ENCODE measurements at regions of chr6 and their contacts with region 1.

Region 1: GRCh38 chr6:38570750-38571149 is 69.0 kb downstream of the BTBD9 start:
- DNase-seq: peak; percentile 50
- ATAC-seq: no peak
- H3K4me3 ChIP-seq: no peak overlapping the region
- H3K4me3 Mint-ChIP-seq: no peak overlapping the region
- H3K27ac ChIP-seq: peak overlapping the region; percentile 91 to 93
- H3K27ac Mint-ChIP-seq: peak overlapping the region; percentile 81
- H3K4me1 ChIP-seq: peaks cover 17 to 21% of the 10 kb centered on the region in 2 donors
- H3K4me1 Mint-ChIP-seq: peaks cover 24% of the 10 kb centered on the region
- H3K27me3 ChIP-seq: no peaks in the 10 kb centered on the region
- H3K27me3 Mint-ChIP-seq: no peaks in the 10 kb centered on the region
- CTCF ChIP-seq: peak; percentile 71

Region 2: DNA sequence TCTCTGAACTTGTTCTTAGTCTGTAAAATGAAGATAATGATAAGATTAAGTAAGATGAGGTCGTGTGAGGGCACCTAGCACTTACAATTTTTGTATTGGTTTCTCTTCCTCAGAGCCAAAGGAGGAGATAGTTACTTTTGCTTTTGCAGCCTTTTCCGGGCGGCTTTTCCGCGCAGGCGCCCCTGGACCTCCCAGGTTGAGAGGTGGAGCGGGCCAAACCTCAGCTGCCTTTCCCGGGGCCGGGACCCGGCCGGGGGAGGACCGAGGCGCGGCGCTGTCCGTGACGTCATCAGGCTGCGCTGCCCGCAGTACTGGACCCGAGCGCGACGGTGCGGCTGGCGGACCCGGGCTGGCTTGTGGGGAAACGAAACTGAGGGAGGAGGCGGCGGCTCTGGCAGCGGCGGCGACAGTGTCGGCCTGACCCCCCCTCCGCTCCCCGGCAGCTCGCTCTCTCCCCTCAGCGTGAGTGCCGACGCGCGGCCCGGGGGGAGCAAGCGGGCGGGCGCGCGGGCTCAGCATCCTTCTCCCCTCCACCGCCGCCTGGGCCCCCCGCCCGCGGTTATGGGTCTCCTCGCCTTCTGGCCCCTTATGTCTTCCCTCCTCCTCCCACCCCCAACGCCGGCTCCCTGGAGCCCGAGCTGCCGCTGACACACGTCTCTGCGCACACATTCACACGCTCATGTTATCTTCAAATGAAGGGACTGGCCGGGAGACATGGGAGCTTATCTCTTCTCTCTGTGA is 1137.7 kb before region 1 on chr6 and contains the start of gene CMTR1:
- CTCF ChIA-PET with region 1: no interaction called
- POLR2A ChIA-PET with region 1: no interaction called
- intact Hi-C with region 1: loop called (anchors 5 kb)
- DNase-seq: peak; percentile 98
- ATAC-seq: peak; percentile 88
- H3K4me3 ChIP-seq: peak within 1 kb of the TSS; percentile 88 to 97 (median 94)
- H3K4me3 Mint-ChIP-seq: peak within 1 kb of the TSS; percentile 96
- H3K27ac ChIP-seq: peak within 1 kb of the TSS; percentile 92 to 94
- H3K27ac Mint-ChIP-seq: peak within 1 kb of the TSS; percentile 96
- H3K4me1 ChIP-seq: peaks cover 17 to 26% of the 10 kb centered on the region in 2 donors
- H3K4me1 Mint-ChIP-seq: peaks cover 40% of the 10 kb centered on the region
- H3K27me3 ChIP-seq: no peaks in the 10 kb centered on the region
- H3K27me3 Mint-ChIP-seq: peaks cover under 1% of the 10 kb centered on the region
- CTCF ChIP-seq: no peak
- total RNA-seq, gene CMTR1: 81.3 and 82.9 TPM in 2 replicates

Region 3: GRCh38 chr6:37691904-37692806 is 878.6 kb before region 1 on chr6:
- CTCF ChIA-PET with region 1: interaction called, 10 read pairs
- POLR2A ChIA-PET with region 1: no interaction called
- intact Hi-C with region 1: loop called (anchors 5 kb)
- DNase-seq: peak; percentile 84
- ATAC-seq: peak; percentile 82
- H3K4me3 ChIP-seq: no peak overlapping the region
- H3K4me3 Mint-ChIP-seq: no peak overlapping the region
- H3K27ac ChIP-seq: no peak overlapping the region
- H3K27ac Mint-ChIP-seq: no peak overlapping the region
- H3K4me1 ChIP-seq: peaks cover 21 to 23% of the 10 kb centered on the region in 2 donors
- H3K4me1 Mint-ChIP-seq: peaks cover 26% of the 10 kb centered on the region
- H3K27me3 ChIP-seq: peaks cover 0 to 34% (median 14%) of the 10 kb centered on the region in 4 experiments
- H3K27me3 Mint-ChIP-seq: peaks cover 26% of the 10 kb centered on the region
- CTCF ChIP-seq: peak; percentile 95

Region 4: GRCh38 chr6:38012573-38012972 is 558.2 kb before region 1 on chr6:
- CTCF ChIA-PET with region 1: interaction called, 15 read pairs
- POLR2A ChIA-PET with region 1: no interaction called
- intact Hi-C with region 1: no loop called
- DNase-seq: peak; percentile 50
- ATAC-seq: peak; percentile 73
- H3K4me3 ChIP-seq: no peak overlapping the region
- H3K4me3 Mint-ChIP-seq: no peak overlapping the region
- H3K27ac ChIP-seq: no peak overlapping the region
- H3K27ac Mint-ChIP-seq: no peak overlapping the region
- H3K4me1 ChIP-seq: peaks cover 4 to 10% of the 10 kb centered on the region in 2 donors
- H3K4me1 Mint-ChIP-seq: peaks cover 33% of the 10 kb centered on the region
- H3K27me3 ChIP-seq: no peaks in the 10 kb centered on the region
- H3K27me3 Mint-ChIP-seq: no peaks in the 10 kb centered on the region
- CTCF ChIP-seq: peak; percentile 78

Region 5: GRCh38 chr6:38493931-38494547 is 76.7 kb before region 1 on chr6:
- CTCF ChIA-PET with region 1: interaction called, 65 read pairs
- POLR2A ChIA-PET with region 1: interaction called, 4 read pairs
- intact Hi-C with region 1: loop called (anchors 1 kb)
- DNase-seq: peak; percentile 82
- ATAC-seq: peak; percentile 45
- H3K4me3 ChIP-seq: no peak overlapping the region
- H3K4me3 Mint-ChIP-seq: no peak overlapping the region
- H3K27ac ChIP-seq: no peak overlapping the region
- H3K27ac Mint-ChIP-seq: no peak overlapping the region
- H3K4me1 ChIP-seq: no peaks in the 10 kb centered on the region
- H3K4me1 Mint-ChIP-seq: peaks cover 11% of the 10 kb centered on the region
- H3K27me3 ChIP-seq: no peaks in the 10 kb centered on the region
- H3K27me3 Mint-ChIP-seq: no peaks in the 10 kb centered on the region
- CTCF ChIP-seq: peak; percentile 98

Region 6: GRCh38 chr6:38639498-38640215 is 68.9 kb after region 1 on chr6 and contains the start of gene BTBD9:
- CTCF ChIA-PET with region 1: interaction called, 3 read pairs
- POLR2A ChIA-PET with region 1: interaction called, 7 read pairs
- intact Hi-C with region 1: loop called (anchors 1 kb)
- DNase-seq: peak; percentile 95
- ATAC-seq: peak; percentile 88
- H3K4me3 ChIP-seq: peak within 1 kb of the TSS; percentile 83 to 95 (median 88)
- H3K4me3 Mint-ChIP-seq: peak within 1 kb of the TSS; percentile 81
- H3K27ac ChIP-seq: peak within 1 kb of the TSS; percentile 92 to 99
- H3K27ac Mint-ChIP-seq: peak within 1 kb of the TSS; percentile 89
- H3K4me1 ChIP-seq: peaks cover 18% of the 10 kb centered on the region in 2 donors
- H3K4me1 Mint-ChIP-seq: peaks cover 42% of the 10 kb centered on the region
- H3K27me3 ChIP-seq: no peaks in the 10 kb centered on the region
- H3K27me3 Mint-ChIP-seq: no peaks in the 10 kb centered on the region
- CTCF ChIP-seq: no peak
- total RNA-seq, gene BTBD9: 48.9 and 57.8 TPM in 2 replicates

Region 7: GRCh38 chr6:39239527-39240154 is 668.9 kb after region 1 on chr6:
- CTCF ChIA-PET with region 1: no interaction called
- POLR2A ChIA-PET with region 1: no interaction called
- intact Hi-C with region 1: no loop called
- DNase-seq: no peak
- ATAC-seq: no peak
- H3K4me3 ChIP-seq: no peak overlapping the region
- H3K4me3 Mint-ChIP-seq: no peak overlapping the region
- H3K27ac ChIP-seq: no peak overlapping the region
- H3K27ac Mint-ChIP-seq: no peak overlapping the region
- H3K4me1 ChIP-seq: no peaks in the 10 kb centered on the region
- H3K4me1 Mint-ChIP-seq: no peaks in the 10 kb centered on the region
- H3K27me3 ChIP-seq: no peaks in the 10 kb centered on the region
- H3K27me3 Mint-ChIP-seq: peaks cover 8% of the 10 kb centered on the region
- CTCF ChIP-seq: no peak

Measured in B cell (primary cell).